MCF 10A (cell line): ENCODE measurements at regions of chr12 and their contacts with region 1.

Region 1: GRCh38 chr12:24012528-24012927 is 63.1 kb upstream of the SOX5 start:
- DNase-seq: peak; percentile 54
- H3K4me3 Mint-ChIP-seq: no peak overlapping the region
- H3K27ac Mint-ChIP-seq: no peak overlapping the region
- H3K4me1 Mint-ChIP-seq: no peaks in the 10 kb centered on the region
- H3K27me3 Mint-ChIP-seq: no peaks in the 10 kb centered on the region
- CTCF ChIP-seq: peak; percentile 54

Region 2: DNA sequence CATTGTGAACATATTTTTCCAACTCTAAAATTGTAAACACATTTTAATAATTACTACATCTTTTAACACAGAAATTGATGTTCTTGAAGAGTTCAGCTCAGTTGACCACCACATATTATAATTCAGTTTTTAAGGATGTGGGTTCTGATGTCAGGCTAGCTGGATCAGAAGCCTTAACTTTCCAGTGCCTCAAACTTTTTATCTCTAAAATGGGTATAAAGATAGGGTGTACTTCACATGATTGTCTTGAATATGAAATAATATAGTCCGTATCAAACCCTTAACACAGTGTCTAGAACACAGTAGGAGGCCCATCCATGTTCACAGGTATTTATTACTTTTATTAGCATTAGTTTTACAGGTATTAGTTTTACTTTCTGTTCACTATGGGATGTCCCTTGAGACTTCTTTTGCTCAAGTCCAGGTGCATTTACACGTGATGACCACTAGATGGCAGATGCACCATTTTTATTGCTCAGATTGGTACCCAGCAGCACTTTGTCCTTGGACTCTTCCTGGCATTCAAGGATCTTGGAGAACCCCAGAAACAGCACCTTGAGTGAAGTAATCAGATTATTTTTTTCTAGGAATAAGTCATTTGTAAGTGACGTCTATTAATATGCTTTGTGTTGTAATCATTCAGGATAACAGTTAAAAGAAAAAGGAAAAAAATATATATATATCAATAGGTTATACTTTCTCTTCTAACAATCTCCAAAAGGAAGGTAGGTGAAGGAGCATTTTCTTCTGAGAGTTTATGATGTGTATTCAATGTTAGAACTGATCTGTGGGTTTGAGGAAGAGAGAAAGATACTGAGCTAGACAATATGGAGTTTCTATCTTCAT is 807.4 kb before region 1 on chr12:
- CTCF ChIA-PET with region 1: interaction called, 4 read pairs
- POLR2A ChIA-PET with region 1: no interaction called
- intact Hi-C with region 1: loop called (anchors 10 kb)
- DNase-seq: peak; percentile 58
- H3K4me3 Mint-ChIP-seq: no peak overlapping the region
- H3K27ac Mint-ChIP-seq: no peak overlapping the region
- H3K4me1 Mint-ChIP-seq: peaks cover 9% of the 10 kb centered on the region
- H3K27me3 Mint-ChIP-seq: peaks cover 37% of the 10 kb centered on the region
- CTCF ChIP-seq: peak; percentile 84

Region 3: DNA sequence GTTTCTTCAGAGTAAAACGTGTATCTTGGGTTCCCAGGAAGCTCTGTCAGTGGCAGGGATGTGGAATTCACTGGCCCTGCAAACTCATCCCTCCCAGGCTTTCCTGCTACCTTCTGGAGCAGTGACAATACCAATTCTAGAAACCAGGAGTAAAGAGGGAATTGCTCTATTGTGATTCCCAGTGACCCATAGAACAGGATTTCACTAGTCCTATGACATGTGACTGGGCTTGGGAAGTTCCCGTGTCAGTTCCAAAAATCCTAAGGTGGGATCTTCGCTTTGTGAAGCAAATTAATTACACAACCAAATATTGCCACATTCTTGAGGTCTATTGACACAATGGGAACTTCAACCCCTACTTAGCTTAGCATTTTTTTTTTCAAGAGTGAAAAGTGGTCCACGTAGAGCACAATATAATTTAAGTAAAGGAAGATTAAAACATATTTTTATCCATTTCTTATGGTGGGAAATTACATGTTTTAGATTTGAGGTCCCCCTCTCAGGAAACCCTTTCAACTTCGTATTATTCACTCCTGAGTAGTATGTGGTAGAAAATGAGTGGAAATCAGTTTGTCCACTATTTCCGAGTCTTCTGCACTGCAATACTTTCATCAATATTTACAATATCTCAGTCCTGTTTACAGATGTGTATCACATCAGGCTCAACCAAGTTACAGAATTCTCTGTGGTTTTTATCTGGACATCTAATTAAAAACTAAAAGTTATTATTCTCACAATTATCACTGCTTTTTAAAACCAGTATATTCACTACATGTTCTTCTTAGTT is 25.9 kb after region 1 on chr12:
- CTCF ChIA-PET with region 1: no interaction called
- POLR2A ChIA-PET with region 1: no interaction called
- intact Hi-C with region 1: no loop called
- DNase-seq: peak; percentile 93
- H3K4me3 Mint-ChIP-seq: no peak overlapping the region
- H3K27ac Mint-ChIP-seq: peak overlapping the region; percentile 57
- H3K4me1 Mint-ChIP-seq: peaks cover 30% of the 10 kb centered on the region
- H3K27me3 Mint-ChIP-seq: no peaks in the 10 kb centered on the region
- CTCF ChIP-seq: no peak

Region 4: GRCh38 chr12:24109381-24110039 is 97.0 kb after region 1 on chr12:
- CTCF ChIA-PET with region 1: interaction called, 3 read pairs
- POLR2A ChIA-PET with region 1: no interaction called
- intact Hi-C with region 1: loop called (anchors 5 kb)
- DNase-seq: peak; percentile 27
- H3K4me3 Mint-ChIP-seq: no peak overlapping the region
- H3K27ac Mint-ChIP-seq: no peak overlapping the region
- H3K4me1 Mint-ChIP-seq: no peaks in the 10 kb centered on the region
- H3K27me3 Mint-ChIP-seq: no peaks in the 10 kb centered on the region
- CTCF ChIP-seq: peak; percentile 36

Region 5: DNA sequence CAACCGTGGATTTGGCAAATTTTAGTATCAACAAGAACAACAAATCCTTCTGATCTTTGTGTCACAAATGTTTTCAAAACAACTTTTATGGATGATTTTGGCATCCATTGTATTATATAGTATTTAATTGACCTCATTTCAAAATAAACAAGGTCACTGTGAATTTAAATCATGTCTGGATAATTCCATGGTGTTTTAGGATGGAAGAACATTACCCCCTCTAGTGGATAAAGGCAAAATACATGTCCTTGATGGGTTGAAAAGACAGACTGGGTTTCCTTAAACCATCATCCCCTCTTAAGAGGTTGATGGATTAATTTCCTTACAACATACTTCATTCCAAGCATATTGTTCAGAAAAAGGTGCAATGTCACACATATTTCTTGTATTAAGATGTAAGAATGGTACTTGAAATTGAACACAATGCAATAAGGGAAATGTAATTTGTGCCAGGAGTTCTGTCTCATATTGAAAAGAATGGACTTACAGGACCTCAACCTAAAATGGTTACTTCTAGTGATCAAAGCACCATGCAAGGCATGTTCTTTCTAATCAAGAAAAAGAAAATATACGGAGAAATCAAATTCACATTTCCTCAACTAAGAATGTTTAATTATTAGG is 584.4 kb after region 1 on chr12:
- CTCF ChIA-PET with region 1: interaction called, 3 read pairs
- POLR2A ChIA-PET with region 1: no interaction called
- intact Hi-C with region 1: loop called (anchors 1 kb)
- DNase-seq: peak; percentile 54
- H3K4me3 Mint-ChIP-seq: no peak overlapping the region
- H3K27ac Mint-ChIP-seq: no peak overlapping the region
- H3K4me1 Mint-ChIP-seq: peaks cover 6% of the 10 kb centered on the region
- H3K27me3 Mint-ChIP-seq: peaks cover 22% of the 10 kb centered on the region
- CTCF ChIP-seq: peak; percentile 53